H1 (cell line): ENCODE measurements at regions of chr2 and their contacts with region 1.

Region 1: DNA sequence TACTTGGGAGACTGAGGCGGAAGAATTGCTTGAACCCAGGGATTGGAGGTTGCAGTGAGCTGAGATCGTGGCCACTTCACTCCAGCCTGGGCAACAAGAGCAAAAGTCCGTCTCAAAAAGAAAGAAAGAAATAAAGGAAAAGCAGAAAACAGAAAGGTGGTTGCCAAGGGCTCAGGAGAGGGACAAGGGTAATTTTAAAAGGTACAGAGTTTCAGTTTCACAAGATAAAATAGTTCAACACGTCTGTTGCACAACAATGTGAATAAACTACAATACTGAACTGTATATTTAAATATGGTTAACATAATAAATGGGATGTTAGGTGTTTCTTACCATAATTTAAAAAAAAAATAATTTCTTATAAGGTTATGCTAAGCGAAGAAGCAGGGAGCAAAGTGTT is 12.9 kb downstream of the RPS27A start:
- DNase-seq: no peak
- H3K4me3 ChIP-seq: no peak overlapping the region
- H3K27ac ChIP-seq: no peak overlapping the region
- H3K4me1 ChIP-seq: no peaks in the 10 kb centered on the region
- H3K27me3 ChIP-seq: no peaks in the 10 kb centered on the region
- CTCF ChIP-seq: no peak
- EP300 ChIP-seq: no peak
- POLR2A ChIP-seq: no peak
- RAD21 ChIP-seq: no peak

Region 2: DNA sequence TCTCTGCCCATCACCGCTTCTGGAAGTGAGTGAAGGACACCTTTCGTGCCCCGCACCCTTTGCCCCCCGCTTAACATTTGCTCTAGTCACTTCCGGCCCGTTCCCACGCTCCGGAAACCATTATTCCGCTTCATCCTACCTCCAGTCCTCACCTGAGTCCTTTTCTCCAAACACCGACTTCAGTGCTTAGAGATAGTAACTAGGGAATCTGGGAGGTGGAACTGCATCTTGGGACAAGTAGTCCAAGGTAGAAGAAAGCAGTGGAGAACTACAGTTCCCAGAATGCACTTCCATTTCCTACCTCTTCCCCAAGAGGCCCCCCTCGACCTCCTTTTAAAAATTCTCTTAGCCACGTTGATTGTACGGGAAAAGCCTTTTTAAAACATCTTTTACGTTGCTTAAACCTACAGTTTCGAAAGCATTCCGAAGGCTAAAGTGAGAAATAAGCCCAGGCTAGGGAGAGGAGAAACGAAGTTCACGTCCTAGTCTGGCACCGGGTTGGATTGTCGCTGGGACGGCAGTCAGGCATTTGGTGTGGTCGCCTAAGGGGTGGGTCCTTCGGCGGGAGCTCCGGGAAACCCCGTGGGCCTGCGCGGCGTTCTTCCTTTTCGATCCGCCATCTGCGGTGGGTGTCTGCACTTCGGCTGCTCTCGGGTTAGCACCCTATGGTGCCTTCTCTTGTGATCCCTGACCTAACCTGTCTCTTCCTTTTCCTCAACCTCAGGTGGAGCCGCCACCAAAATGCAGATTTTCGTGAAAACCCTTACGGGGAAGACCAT is 13.1 kb before region 1 on chr2 and contains the starts of genes CLHC1 and RPS27A:
- CTCF ChIA-PET with region 1: no interaction called
- POLR2A ChIA-PET with region 1: interaction called, 10 read pairs
- DNase-seq: peak; percentile 78 to 96
- H3K4me3 ChIP-seq: peak within 1 kb of the TSS; percentile 94 to 99 (median 96)
- H3K27ac ChIP-seq: peak within 1 kb of the TSS; percentile 97
- H3K4me1 ChIP-seq: peaks cover 0 to 5% (median 3%) of the 10 kb centered on the region in 4 experiments; a peak in 4 of 7 replicates
- H3K27me3 ChIP-seq: no peaks in the 10 kb centered on the region
- CTCF ChIP-seq: no peak
- EP300 ChIP-seq: 0 out of 3 replicates have a peak, but pooled peaks of 1 of the 2 experiments have one; percentile 4
- POLR2A ChIP-seq: peak; percentile 88 to 93
- RAD21 ChIP-seq: no peak
- total RNA-seq, gene CLHC1: 7.2 and 10.8 TPM in 2 replicates
- total RNA-seq, gene RPS27A: 1,427 and 1,431 TPM in 2 replicates